GM12878 (cell line): ENCODE measurements at regions of chr2 and their contacts with region 1.

Region 1: GRCh38 chr2:102240640-102241370 is 54.0 kb downstream of the IL1RL2 start:
- DNase-seq: peak; percentile 88
- ATAC-seq: peak; percentile 96
- H3K4me3 ChIP-seq: no peak overlapping the region
- H3K27ac ChIP-seq: no peak overlapping the region
- H3K4me1 ChIP-seq: peaks cover 13% of the 10 kb centered on the region; the same call in 1 of the 2 replicates
- H3K27me3 ChIP-seq: no peaks in the 10 kb centered on the region
- CTCF ChIP-seq: peak; percentile 95 to 98 (median 97); a peak in 5 of 6 replicates
- EP300 ChIP-seq: peak; percentile 64 to 69; a peak in 3 of 4 replicates
- POLR2A ChIP-seq: no peak
- RAD21 ChIP-seq: peak; percentile 90

Region 2: GRCh38 chr2:101387151-101387807 is 853.5 kb before region 1 on chr2 and contains the start of gene CREG2:
- CTCF ChIA-PET with region 1: no interaction called
- POLR2A ChIA-PET with region 1: no interaction called
- RAD21 ChIA-PET with region 1: no interaction called
- SMC1A ChIA-PET with region 1: no interaction called
- in situ Hi-C with region 1: no loop called
- intact Hi-C with region 1: no loop called
- DNase-seq: no peak
- ATAC-seq: peak; percentile 57
- H3K4me3 ChIP-seq: no peak within 1 kb of the TSS
- H3K27ac ChIP-seq: no peak within 1 kb of the TSS
- H3K4me1 ChIP-seq: no peaks in the 10 kb centered on the region
- H3K27me3 ChIP-seq: peaks cover 3 to 8% of the 10 kb centered on the region in 2 experiments
- CTCF ChIP-seq: 0 out of 6 replicates have a peak, but pooled peaks of 1 of the 3 experiments have one; percentile 10
- EP300 ChIP-seq: no peak
- POLR2A ChIP-seq: no peak
- RAD21 ChIP-seq: no peak
- polyA plus RNA-seq, gene CREG2: not detected

Region 3: DNA sequence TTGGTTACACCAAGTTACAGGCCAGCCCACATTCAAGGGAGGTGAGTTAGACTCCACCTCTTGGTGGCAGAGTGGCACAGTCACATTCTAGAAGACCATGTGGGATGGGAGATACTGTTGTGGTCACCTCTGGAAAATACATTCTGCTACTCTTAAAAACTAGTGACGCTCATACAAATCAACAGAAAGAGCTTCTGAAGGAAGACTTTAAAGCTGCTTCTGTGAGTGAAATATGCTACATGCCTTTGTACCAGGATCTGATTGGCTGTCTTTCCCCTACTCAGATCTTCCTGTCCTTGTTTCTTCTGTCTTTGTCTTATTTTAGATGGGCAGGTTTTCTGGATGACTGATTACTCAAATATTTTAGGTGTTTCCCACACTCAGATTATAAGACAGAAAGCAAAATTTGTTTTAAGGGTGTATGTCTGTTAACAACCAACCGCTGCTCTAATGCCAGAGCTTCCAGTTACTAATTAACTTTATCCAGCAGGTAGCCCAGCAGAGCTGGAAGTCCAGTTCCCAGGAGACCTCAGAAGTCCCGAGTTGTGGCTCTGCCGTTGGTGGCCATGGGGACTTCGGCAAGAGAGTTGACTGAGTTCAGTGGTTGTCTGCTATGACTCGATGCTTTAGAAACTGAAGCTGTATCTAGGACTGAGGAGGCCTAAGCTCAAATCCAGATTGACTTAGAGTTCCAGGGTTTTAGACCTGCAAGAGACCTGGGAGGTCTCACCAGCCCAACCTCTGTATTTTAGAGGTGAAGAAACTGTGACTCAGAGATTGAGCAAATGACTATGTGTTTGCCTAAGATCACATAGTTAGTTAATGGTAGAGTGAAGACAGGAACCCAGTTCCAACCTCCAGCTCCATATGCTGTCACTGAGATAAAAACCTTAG is 241.7 kb before region 1 on chr2:
- CTCF ChIA-PET with region 1: interaction called, 168 read pairs
- POLR2A ChIA-PET with region 1: interaction called, 7 read pairs
- RAD21 ChIA-PET with region 1: interaction called, 124 read pairs
- SMC1A ChIA-PET with region 1: interaction called, 119 read pairs
- in situ Hi-C with region 1: no loop called
- intact Hi-C with region 1: no loop called
- DNase-seq: no peak
- ATAC-seq: peak; percentile 71
- H3K4me3 ChIP-seq: no peak overlapping the region
- H3K27ac ChIP-seq: peak overlapping the region; percentile 50; the same call in 1 of the 2 replicates
- H3K4me1 ChIP-seq: peaks cover 6% of the 10 kb centered on the region
- H3K27me3 ChIP-seq: no peaks in the 10 kb centered on the region; a peak in 2 of 4 replicates
- CTCF ChIP-seq: no peak; a peak in 1 of 6 replicates
- EP300 ChIP-seq: 0 out of 4 replicates have a peak, but pooled peaks of 1 of the 2 experiments have one; percentile 13
- POLR2A ChIP-seq: no peak
- RAD21 ChIP-seq: no peak

Region 4: DNA sequence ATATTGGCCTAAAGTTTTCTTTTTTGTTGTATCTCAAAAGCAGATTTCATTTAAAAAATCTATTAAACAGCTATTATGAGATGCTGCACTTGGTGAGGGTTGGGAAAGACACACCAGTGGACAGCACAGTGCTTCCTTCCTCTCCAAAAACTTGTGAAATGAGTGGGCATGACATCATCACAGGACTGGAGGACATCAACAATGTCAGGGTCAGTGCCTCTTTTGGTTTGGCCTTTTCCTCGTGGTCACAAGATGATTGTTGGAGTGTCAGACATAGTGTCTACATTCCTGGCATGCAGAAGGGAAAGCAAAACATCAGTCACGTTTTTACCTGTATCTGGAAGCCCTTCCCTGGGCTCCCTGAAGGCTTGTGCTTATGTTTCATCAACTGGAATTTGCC is 199.5 kb before region 1 on chr2:
- CTCF ChIA-PET with region 1: interaction called, 10 read pairs
- POLR2A ChIA-PET with region 1: no interaction called
- RAD21 ChIA-PET with region 1: interaction called, 16 read pairs
- SMC1A ChIA-PET with region 1: interaction called, 4 read pairs
- in situ Hi-C with region 1: no loop called
- intact Hi-C with region 1: no loop called
- DNase-seq: no peak
- ATAC-seq: no peak; the same call in 2 of the 3 replicates
- H3K4me3 ChIP-seq: no peak overlapping the region
- H3K27ac ChIP-seq: no peak overlapping the region
- H3K4me1 ChIP-seq: no peaks in the 10 kb centered on the region
- H3K27me3 ChIP-seq: no peaks in the 10 kb centered on the region
- CTCF ChIP-seq: no peak
- EP300 ChIP-seq: no peak
- POLR2A ChIP-seq: no peak
- RAD21 ChIP-seq: no peak

Region 5: GRCh38 chr2:102103992-102104871 is 136.6 kb before region 1 on chr2:
- CTCF ChIA-PET with region 1: interaction called, 28 read pairs
- POLR2A ChIA-PET with region 1: interaction called, 8 read pairs
- RAD21 ChIA-PET with region 1: interaction called, 46 read pairs
- SMC1A ChIA-PET with region 1: interaction called, 44 read pairs
- in situ Hi-C with region 1: no loop called
- intact Hi-C with region 1: loop called (anchors 1 kb)
- DNase-seq: peak; percentile 67
- ATAC-seq: peak; percentile 79
- H3K4me3 ChIP-seq: peak overlapping the region; percentile 53
- H3K27ac ChIP-seq: peak overlapping the region; percentile 37; the same call in 1 of the 2 replicates
- H3K4me1 ChIP-seq: no peaks in the 10 kb centered on the region
- H3K27me3 ChIP-seq: no peaks in the 10 kb centered on the region
- CTCF ChIP-seq: no peak
- EP300 ChIP-seq: peak in 1 of 2 experiments; percentile 54; a peak in 2 of 4 replicates
- POLR2A ChIP-seq: no peak
- RAD21 ChIP-seq: no peak

Region 6: DNA sequence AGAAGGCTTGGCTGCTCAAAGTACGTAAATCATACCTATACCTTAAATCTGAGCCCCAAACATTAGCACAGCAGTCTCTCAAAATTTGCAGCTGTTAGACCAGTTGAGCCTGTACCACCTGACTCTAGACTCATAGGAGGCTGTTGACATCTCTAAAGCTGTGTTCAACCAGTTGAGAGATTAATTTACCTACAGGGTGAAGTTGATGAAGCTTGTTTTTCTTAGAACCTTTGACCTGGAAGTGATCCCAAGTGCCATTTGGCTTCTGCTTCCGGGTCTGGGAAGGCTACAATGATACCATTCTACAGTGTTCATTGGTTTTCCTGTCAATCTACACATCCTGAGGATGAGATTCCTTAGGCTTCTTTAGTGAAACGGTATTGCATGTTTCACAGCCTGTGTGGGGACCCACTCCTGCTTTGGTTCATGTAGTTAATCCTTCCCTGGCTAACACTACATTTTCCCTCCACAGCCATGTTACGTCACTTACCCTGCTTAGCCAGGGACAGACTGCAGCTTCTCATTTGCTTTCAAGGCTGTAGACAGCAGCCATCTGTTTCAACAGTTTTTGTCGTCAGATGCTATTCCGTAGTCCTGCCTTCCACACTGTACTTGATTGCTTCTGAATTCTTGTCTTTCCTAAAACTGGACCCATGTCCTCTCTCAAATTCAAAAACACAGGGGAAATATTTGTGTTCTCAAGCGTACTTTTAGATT is 58.7 kb before region 1 on chr2:
- CTCF ChIA-PET with region 1: interaction called, 9 read pairs
- POLR2A ChIA-PET with region 1: no interaction called
- RAD21 ChIA-PET with region 1: interaction called, 5 read pairs
- SMC1A ChIA-PET with region 1: interaction called, 14 read pairs
- in situ Hi-C with region 1: no loop called
- intact Hi-C with region 1: loop called (anchors 2 kb)
- DNase-seq: no peak
- ATAC-seq: no peak
- H3K4me3 ChIP-seq: no peak overlapping the region
- H3K27ac ChIP-seq: no peak overlapping the region
- H3K4me1 ChIP-seq: no peaks in the 10 kb centered on the region
- H3K27me3 ChIP-seq: no peaks in the 10 kb centered on the region; a peak in 1 of 4 replicates
- CTCF ChIP-seq: no peak
- EP300 ChIP-seq: no peak
- POLR2A ChIP-seq: no peak
- RAD21 ChIP-seq: no peak

Region 7: DNA sequence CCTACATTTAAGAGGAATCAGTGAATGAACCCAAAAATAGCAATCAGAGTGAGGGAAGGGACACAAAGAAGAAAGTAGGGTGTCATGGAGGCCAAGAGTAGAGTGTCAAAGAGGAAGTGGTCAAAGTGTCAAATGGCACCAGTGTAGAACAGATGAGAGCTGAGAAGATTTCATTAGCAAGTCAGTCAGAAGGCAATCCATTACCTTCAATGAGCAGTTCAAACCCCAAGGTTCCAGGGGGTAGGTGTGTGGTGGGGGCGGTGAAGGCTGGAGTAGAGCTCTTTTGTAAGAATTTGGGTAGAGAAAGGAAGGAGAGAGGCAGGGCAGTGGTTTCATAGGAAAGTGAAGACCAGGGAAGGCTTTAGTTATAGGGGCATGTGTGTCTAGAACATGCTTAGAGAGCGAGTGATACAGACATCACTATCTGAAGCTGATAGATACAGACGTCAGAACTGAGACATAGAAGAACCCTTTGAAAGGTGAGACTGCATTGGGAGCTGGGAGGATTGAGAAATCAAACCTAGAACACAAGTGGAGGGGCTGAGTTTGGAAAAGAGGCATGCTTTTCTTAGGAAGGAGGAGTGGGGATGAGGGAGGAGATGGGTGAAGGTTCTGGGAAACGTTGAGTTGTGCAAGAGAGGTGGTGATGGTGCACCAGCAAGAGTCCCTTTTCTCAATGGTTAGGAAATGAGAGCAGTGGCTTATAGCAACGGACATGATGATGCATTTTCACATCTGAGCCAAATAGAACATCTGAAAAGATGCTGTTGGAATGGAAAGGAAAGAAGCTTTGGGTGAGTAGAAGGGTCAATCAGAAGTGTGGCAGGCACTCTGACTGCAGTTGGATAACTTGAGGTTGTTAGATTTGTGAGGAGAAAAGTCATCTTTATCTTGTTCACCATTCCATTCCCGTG is 21.7 kb after region 1 on chr2:
- CTCF ChIA-PET with region 1: interaction called, 10 read pairs
- POLR2A ChIA-PET with region 1: no interaction called
- RAD21 ChIA-PET with region 1: interaction called, 8 read pairs
- SMC1A ChIA-PET with region 1: interaction called, 3 read pairs
- in situ Hi-C with region 1: no loop called
- intact Hi-C with region 1: no loop called
- DNase-seq: no peak
- ATAC-seq: no peak; the same call in 2 of the 3 replicates
- H3K4me3 ChIP-seq: no peak overlapping the region
- H3K27ac ChIP-seq: no peak overlapping the region
- H3K4me1 ChIP-seq: no peaks in the 10 kb centered on the region
- H3K27me3 ChIP-seq: no peaks in the 10 kb centered on the region; a peak in 1 of 4 replicates
- CTCF ChIP-seq: no peak
- EP300 ChIP-seq: no peak
- POLR2A ChIP-seq: no peak
- RAD21 ChIP-seq: no peak

Region 8: GRCh38 chr2:102460467-102460866 is 219.7 kb after region 1 on chr2:
- CTCF ChIA-PET with region 1: interaction called, 11 read pairs
- POLR2A ChIA-PET with region 1: no interaction called
- RAD21 ChIA-PET with region 1: no interaction called
- SMC1A ChIA-PET with region 1: no interaction called
- in situ Hi-C with region 1: no loop called
- intact Hi-C with region 1: no loop called
- DNase-seq: no peak
- ATAC-seq: no peak
- H3K4me3 ChIP-seq: no peak overlapping the region
- H3K27ac ChIP-seq: no peak overlapping the region
- H3K4me1 ChIP-seq: no peaks in the 10 kb centered on the region
- H3K27me3 ChIP-seq: no peaks in the 10 kb centered on the region; a peak in 1 of 4 replicates
- CTCF ChIP-seq: no peak; a peak in 1 of 6 replicates
- EP300 ChIP-seq: no peak
- POLR2A ChIP-seq: no peak
- RAD21 ChIP-seq: no peak